ENCODE measurements at regions of chr4 and their contacts with region 1.

Region 1: DNA sequence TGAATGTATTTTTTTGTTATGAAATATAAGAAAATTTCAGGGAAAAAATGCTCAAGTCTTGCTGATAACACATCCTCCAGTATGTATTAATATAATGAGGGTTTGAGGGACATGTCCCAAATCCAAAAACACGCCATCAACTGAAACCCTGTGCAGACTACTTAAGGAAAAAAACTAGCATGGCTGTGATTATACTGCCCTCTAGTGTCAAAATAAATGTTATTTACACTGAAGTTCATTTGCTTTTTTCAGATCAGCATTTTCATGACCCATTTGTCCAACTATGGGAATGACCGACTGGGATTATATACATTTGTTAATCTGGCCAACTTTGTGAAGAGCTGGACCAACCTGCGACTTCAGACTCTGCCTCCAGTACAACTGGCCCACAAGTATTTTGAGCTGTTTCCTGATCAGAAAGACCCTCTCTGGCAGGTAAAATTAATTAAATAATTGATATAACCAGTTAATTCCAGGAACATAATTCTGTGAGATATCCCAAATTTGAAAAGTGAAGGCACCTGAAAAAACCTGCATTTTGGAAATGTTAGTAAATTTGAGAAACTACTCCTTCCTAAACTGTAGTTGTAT is 128.5 kb downstream of the PRSS12 start:
- DNase-seq: peak in 1 of 35 experiments; percentile 44
- ATAC-seq: no peak
- H3K4me3 ChIP-seq: no peak overlapping the region
- H3K4me3 Mint-ChIP-seq: no peak overlapping the region
- H3K27ac ChIP-seq: no peak overlapping the region
- H3K27ac Mint-ChIP-seq: no peak overlapping the region
- H3K4me1 ChIP-seq: peaks cover 0 to 10% of the 10 kb centered on the region in 2 experiments
- H3K4me1 Mint-ChIP-seq: no peaks in the 10 kb centered on the region
- H3K27me3 ChIP-seq: no peaks in the 10 kb centered on the region
- H3K27me3 Mint-ChIP-seq: peaks cover 0 to 5% of the 10 kb centered on the region in 2 donors

Region 2: DNA sequence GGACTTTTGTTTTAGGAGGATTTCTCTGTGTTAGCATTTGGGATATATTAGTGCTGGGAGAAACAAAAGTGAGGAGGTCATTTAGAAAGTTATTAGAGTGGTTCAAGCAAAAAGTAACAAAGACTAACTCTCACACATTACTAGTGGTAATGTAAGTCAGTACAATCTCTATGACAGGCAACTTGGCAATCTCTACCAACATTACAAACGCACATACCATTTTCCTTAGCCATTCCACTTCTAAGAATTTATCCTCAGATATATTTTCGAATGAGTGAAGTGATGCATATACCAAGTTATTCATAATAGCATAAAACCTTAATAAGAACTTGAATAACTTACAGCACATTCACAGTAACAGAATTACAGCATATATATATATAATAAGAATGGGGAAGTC is 17.7 kb before region 1 on chr4:
- CTCF ChIA-PET with region 1: interaction called, 4 to 10 read pairs
- POLR2A ChIA-PET with region 1: no interaction called
- DNase-seq: no peak
- ATAC-seq: no peak
- H3K4me3 ChIP-seq: no peak overlapping the region
- H3K4me3 Mint-ChIP-seq: no peak overlapping the region
- H3K27ac ChIP-seq: no peak overlapping the region
- H3K27ac Mint-ChIP-seq: no peak overlapping the region
- H3K4me1 ChIP-seq: no peaks in the 10 kb centered on the region
- H3K4me1 Mint-ChIP-seq: no peaks in the 10 kb centered on the region
- H3K27me3 ChIP-seq: no peaks in the 10 kb centered on the region
- H3K27me3 Mint-ChIP-seq: no peaks in the 10 kb centered on the region

Region 3: DNA sequence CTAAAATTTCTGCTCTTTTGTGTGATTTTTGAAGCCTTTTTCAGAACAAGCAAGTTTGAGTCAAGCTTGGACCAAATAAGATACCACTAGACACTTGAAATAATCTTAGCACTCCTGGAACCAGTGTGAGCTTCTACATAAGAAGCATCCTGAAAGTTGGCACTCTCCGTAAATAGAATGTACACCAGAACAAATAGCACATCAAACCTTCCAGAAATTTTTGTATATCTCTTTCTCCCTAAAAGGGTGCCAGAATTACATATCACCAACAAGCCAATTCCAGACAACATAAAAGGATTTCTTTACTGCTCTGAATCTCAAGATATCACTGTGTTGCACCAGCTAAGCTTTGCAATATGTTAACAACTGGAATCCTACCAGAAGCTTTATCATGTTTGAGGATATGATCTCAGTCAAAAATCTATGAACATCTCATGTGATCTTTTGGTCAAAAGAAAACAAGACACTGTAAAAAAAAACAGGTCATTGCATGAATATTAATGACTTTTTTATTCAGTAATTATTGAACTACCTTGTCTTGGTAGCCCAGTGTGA is 11.3 kb after region 1 on chr4:
- CTCF ChIA-PET with region 1: interaction called, 3 to 10 read pairs
- POLR2A ChIA-PET with region 1: no interaction called
- DNase-seq: no peak
- ATAC-seq: no peak
- H3K4me3 ChIP-seq: no peak overlapping the region
- H3K4me3 Mint-ChIP-seq: no peak overlapping the region
- H3K27ac ChIP-seq: no peak overlapping the region
- H3K27ac Mint-ChIP-seq: no peak overlapping the region
- H3K4me1 ChIP-seq: no peaks in the 10 kb centered on the region
- H3K4me1 Mint-ChIP-seq: no peaks in the 10 kb centered on the region
- H3K27me3 ChIP-seq: peaks cover 0 to 6% of the 10 kb centered on the region in 2 experiments
- H3K27me3 Mint-ChIP-seq: peaks cover 0 to 4% of the 10 kb centered on the region in 2 donors

Measured in T-cell (primary cell).